ENCODE measurements at regions of chr2 and their contacts with region 1.

Region 1: GRCh38 chr2:186101616-186102015 is 363.0 kb downstream of the FSIP2 start:
- DNase-seq: no peak
- ATAC-seq: peak in 1 of 2 donors; percentile 73
- H3K4me3 ChIP-seq: no peak overlapping the region
- H3K27ac ChIP-seq: no peak overlapping the region
- H3K4me1 ChIP-seq: no peaks in the 10 kb centered on the region
- H3K27me3 ChIP-seq: no peaks in the 10 kb centered on the region

Region 2: DNA sequence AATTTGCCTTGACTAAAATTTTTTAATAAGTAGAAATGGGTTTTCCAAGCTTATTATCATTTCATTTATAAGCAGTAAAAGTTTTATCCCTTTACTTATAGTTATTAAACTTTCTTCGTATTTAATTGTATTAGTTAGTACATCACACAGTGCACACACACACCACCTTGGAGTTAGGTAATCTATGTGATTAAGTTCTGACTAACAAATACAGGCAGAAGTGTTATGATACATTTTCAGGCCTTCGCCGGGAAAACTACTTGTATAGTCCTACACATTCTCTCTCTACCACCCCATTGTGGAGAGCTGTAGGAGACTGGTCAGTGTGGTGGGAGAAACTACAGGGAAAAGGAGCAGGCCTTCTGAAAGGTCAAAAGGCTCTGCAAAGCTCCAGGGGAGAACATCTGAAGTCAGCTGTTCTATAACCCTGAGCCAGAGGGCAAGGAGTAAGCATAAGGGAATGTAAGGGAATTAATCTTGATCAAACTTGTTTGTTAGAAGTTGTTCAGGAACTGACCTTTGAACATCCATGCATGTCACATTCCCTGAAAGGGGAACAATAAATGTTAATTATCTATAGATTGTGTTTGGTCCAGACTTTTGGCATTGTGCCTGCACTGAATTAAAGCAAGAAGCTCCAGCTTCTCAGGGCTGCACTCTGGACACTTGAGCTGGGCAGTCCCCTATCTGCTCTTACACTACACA is 131.3 kb before region 1 on chr2:
- intact Hi-C with region 1: no loop called
- DNase-seq: no peak
- ATAC-seq: no peak
- H3K4me3 ChIP-seq: no peak overlapping the region
- H3K27ac ChIP-seq: no peak overlapping the region
- H3K4me1 ChIP-seq: no peaks in the 10 kb centered on the region
- H3K27me3 ChIP-seq: no peaks in the 10 kb centered on the region

Region 3: DNA sequence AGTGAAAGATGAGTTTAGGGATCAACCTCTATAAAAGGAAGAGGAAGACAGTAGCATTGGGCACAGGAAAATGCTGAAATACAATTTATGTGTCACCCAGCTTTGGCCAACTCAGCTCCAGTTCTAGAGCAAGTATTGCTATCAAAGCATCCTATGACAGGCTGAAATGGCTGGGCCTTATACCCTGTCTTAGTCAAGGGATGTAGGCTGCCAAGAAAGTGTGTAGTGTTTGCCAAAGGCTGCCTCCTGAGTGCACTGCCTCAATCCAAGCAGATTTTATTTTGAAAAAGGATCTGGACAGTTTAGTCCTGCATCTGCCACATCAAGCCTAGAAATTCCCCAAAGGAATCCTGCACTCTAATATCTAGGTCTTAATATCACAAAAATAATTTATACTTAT is 24.6 kb after region 1 on chr2:
- intact Hi-C with region 1: loop called in 1 of 4 experiments (anchors 2 kb)
- DNase-seq: peak in 1 of 3 donors; percentile 12
- ATAC-seq: peak in 1 of 2 donors; percentile 80
- H3K4me3 ChIP-seq: no peak overlapping the region
- H3K27ac ChIP-seq: no peak overlapping the region
- H3K4me1 ChIP-seq: no peaks in the 10 kb centered on the region
- H3K27me3 ChIP-seq: no peaks in the 10 kb centered on the region

Measured in right cardiac atrium (tissue), 5 donors.